GM12878 (cell line): ENCODE measurements at regions of chr14 and their contacts with region 1.

Region 1: GRCh38 chr14:105527661-105528581 is 1.5 kb downstream of the TMEM121 start:
- DNase-seq: no peak
- ATAC-seq: peak; percentile 84
- H3K4me3 ChIP-seq: peak overlapping the region; percentile 65
- H3K27ac ChIP-seq: no peak overlapping the region
- H3K4me1 ChIP-seq: peaks cover 4% of the 10 kb centered on the region
- H3K27me3 ChIP-seq: peaks cover 5 to 7% of the 10 kb centered on the region in 2 experiments; a peak in 3 of 4 replicates
- CTCF ChIP-seq: peak; percentile 70 to 92 (median 87)
- EP300 ChIP-seq: no peak
- POLR2A ChIP-seq: no peak
- RAD21 ChIP-seq: peak; percentile 69

Region 2: DNA sequence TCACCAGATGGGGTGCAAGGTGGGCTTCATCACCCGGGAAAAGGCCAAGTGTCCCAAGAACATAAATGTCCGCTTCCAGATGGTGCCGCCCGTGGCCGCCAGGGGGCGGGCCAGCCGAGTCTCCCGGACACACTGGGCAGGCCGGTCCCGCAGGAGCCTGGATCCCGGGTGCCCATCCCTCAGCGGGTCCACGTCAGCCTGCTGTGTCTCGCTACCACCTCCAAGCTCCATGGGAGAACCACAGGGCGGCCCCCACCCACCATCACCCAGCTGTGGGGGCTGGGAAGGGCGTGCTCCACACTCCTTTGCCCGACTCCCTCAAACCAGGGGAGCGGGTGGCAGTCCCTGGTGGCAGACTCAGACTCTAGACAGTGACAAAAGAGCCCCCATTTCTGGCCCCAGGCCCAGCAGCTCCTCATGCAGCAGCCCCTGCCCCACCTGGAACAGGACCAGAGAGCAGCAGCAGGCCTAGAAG is 324.8 kb before region 1 on chr14:
- CTCF ChIA-PET with region 1: no interaction called
- POLR2A ChIA-PET with region 1: no interaction called
- RAD21 ChIA-PET with region 1: no interaction called
- SMC1A ChIA-PET with region 1: no interaction called
- in situ Hi-C with region 1: no loop called
- intact Hi-C with region 1: loop called (anchors 5 kb)
- DNase-seq: no peak
- ATAC-seq: peak; percentile 72
- H3K4me3 ChIP-seq: no peak overlapping the region
- H3K27ac ChIP-seq: no peak overlapping the region
- H3K4me1 ChIP-seq: peaks cover 7% of the 10 kb centered on the region
- H3K27me3 ChIP-seq: peaks cover 0 to 2% of the 10 kb centered on the region in 2 experiments; a peak in 2 of 4 replicates
- CTCF ChIP-seq: peak; percentile 83 to 96 (median 87)
- EP300 ChIP-seq: no peak
- POLR2A ChIP-seq: no peak
- RAD21 ChIP-seq: peak; percentile 61

Region 3: GRCh38 chr14:105369653-105370040 is 158.3 kb before region 1 on chr14:
- CTCF ChIA-PET with region 1: interaction called, 17 read pairs
- POLR2A ChIA-PET with region 1: no interaction called
- RAD21 ChIA-PET with region 1: interaction called, 9 read pairs
- SMC1A ChIA-PET with region 1: interaction called, 11 read pairs
- in situ Hi-C with region 1: no loop called
- intact Hi-C with region 1: loop called (anchors 2 kb)
- DNase-seq: no peak
- ATAC-seq: no peak
- H3K4me3 ChIP-seq: no peak overlapping the region
- H3K27ac ChIP-seq: no peak overlapping the region
- H3K4me1 ChIP-seq: no peaks in the 10 kb centered on the region
- H3K27me3 ChIP-seq: no peaks in the 10 kb centered on the region
- CTCF ChIP-seq: no peak
- EP300 ChIP-seq: no peak
- POLR2A ChIP-seq: no peak
- RAD21 ChIP-seq: no peak

Region 4: GRCh38 chr14:105480952-105481801 is 46.7 kb before region 1 on chr14:
- CTCF ChIA-PET with region 1: interaction called, 18 read pairs
- POLR2A ChIA-PET with region 1: no interaction called
- RAD21 ChIA-PET with region 1: interaction called, 6 read pairs
- SMC1A ChIA-PET with region 1: interaction called, 3 read pairs
- in situ Hi-C with region 1: no loop called
- intact Hi-C with region 1: no loop called
- DNase-seq: no peak
- ATAC-seq: peak; percentile 83
- H3K4me3 ChIP-seq: peak overlapping the region; percentile 25; the same call in 1 of the 2 replicates
- H3K27ac ChIP-seq: no peak overlapping the region; the same call in 1 of the 2 replicates
- H3K4me1 ChIP-seq: peaks cover 24% of the 10 kb centered on the region
- H3K27me3 ChIP-seq: peaks cover under 1 to 2% of the 10 kb centered on the region in 2 experiments; a peak in 3 of 4 replicates
- CTCF ChIP-seq: peak; percentile 95 to 99 (median 99); a peak in 5 of 6 replicates
- EP300 ChIP-seq: no peak
- POLR2A ChIP-seq: no peak
- RAD21 ChIP-seq: peak; percentile 72

Region 5: GRCh38 chr14:105605821-105606506 is 78.0 kb after region 1 on chr14:
- CTCF ChIA-PET with region 1: no interaction called
- POLR2A ChIA-PET with region 1: no interaction called
- RAD21 ChIA-PET with region 1: no interaction called
- SMC1A ChIA-PET with region 1: no interaction called
- in situ Hi-C with region 1: no loop called
- intact Hi-C with region 1: no loop called
- DNase-seq: no peak
- ATAC-seq: no peak
- H3K4me3 ChIP-seq: no peak overlapping the region
- H3K27ac ChIP-seq: no peak overlapping the region
- H3K4me1 ChIP-seq: no peaks in the 10 kb centered on the region; the same call in 1 of the 2 replicates
- H3K27me3 ChIP-seq: no peaks in the 10 kb centered on the region
- CTCF ChIP-seq: no peak
- EP300 ChIP-seq: no peak
- POLR2A ChIP-seq: no peak
- RAD21 ChIP-seq: no peak